Stomach (tissue), 19 donors: ENCODE measurements at regions of chr7 and their contacts with region 1.

Region 1: GRCh38 chr7:36487756-36488336 is 98.2 kb downstream of the ANLN start:
- DNase-seq: peak in 1 of 2 donors; percentile 84
- H3K4me3 ChIP-seq: no peak overlapping the region
- H3K27ac ChIP-seq: no peak overlapping the region
- H3K4me1 ChIP-seq: no peaks in the 10 kb centered on the region
- H3K27me3 ChIP-seq: no peaks in the 10 kb centered on the region
- CTCF ChIP-seq: peak in 5 of 7 experiments; percentile 50 to 81 (median 55)
- EP300 ChIP-seq: no peak
- POLR2A ChIP-seq: no peak

Region 2: DNA sequence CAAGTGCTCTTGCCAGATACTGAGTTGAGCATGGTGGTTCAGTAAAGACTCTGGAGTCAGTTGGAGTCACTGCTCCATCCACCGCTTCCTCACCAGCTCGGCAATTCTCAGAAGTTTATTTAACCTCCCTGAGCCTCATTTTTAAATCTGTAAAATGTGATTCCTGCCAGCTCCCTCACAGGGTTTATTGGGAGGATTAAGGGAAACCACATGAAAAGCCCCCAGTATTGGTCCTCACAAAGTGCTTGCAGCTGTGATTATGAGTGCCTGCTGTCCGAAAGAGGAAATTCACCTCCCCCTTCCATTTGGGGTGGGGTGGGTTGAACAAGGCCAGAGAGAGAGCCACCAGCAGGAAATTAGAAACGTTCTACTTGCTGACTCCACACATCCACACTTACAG is 137.4 kb after region 1 on chr7:
- intact Hi-C with region 1: no loop called
- DNase-seq: peak in 1 of 2 donors; percentile 39
- H3K4me3 ChIP-seq: no peak overlapping the region
- H3K27ac ChIP-seq: no peak overlapping the region
- H3K4me1 ChIP-seq: peaks cover 0 to 11% (median 5%) of the 10 kb centered on the region in 4 donors
- H3K27me3 ChIP-seq: no peaks in the 10 kb centered on the region
- CTCF ChIP-seq: no peak
- EP300 ChIP-seq: no peak
- POLR2A ChIP-seq: no peak

Region 3: DNA sequence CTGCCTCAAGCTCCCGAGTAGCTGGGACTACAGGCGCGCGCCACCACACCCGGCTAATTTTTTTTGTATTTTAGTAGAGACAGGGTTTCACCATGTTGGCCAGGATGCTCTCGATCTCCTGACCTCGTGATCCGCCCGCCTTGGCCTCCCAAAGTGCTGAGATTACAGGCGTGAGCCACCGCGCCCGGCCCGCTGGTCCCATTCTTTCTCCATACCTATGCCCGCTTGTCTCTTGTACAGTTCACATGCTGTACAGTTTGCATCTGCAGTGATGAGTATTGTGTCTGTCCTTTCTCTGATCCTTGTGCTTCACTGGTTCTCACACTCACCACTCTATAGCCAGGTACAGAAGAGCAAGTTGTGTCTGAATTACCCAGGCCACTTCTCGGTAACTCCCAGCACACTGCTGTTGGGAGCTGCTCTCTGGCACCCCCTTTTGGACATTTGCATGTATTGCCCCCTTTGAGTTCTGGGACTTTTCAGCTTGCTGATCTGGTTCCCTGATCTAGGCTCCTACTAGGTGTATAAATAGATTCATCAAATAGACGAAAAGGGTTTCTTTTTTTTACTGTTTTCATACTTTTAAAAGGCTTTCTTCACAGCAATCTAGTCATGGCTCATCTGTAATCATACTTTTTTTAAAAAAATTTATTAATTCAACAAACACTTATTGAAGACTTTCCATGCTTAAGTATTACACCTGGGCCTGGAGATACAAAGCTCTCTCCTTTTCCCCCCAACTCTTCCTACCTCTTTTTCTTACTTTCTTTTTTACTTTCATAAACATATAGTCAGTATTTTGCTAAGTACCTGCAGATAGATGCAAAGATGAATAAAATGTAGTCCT is 183.0 kb after region 1 on chr7:
- intact Hi-C with region 1: loop called (anchors 10 kb)
- DNase-seq: peak; percentile 64 to 86
- H3K4me3 ChIP-seq: no peak overlapping the region
- H3K27ac ChIP-seq: no peak overlapping the region
- H3K4me1 ChIP-seq: peaks cover 0 to 5% (median 0%) of the 10 kb centered on the region in 4 donors
- H3K27me3 ChIP-seq: no peaks in the 10 kb centered on the region
- CTCF ChIP-seq: peak in 5 of 7 experiments; percentile 70 to 82 (median 79)
- EP300 ChIP-seq: no peak
- POLR2A ChIP-seq: no peak

Region 4: GRCh38 chr7:37198906-37199485 is 711.1 kb after region 1 on chr7:
- intact Hi-C with region 1: loop called (anchors 10 kb)
- DNase-seq: peak; percentile 85 to 93
- H3K4me3 ChIP-seq: no peak overlapping the region
- H3K27ac ChIP-seq: no peak overlapping the region
- H3K4me1 ChIP-seq: peaks cover 5 to 46% (median 27%) of the 10 kb centered on the region in 4 donors
- H3K27me3 ChIP-seq: no peaks in the 10 kb centered on the region
- CTCF ChIP-seq: peak in 5 of 7 experiments; percentile 61 to 85 (median 80)
- EP300 ChIP-seq: no peak
- POLR2A ChIP-seq: no peak